ENCODE measurements at regions of chr4 and their contacts with region 1.

Region 1: DNA sequence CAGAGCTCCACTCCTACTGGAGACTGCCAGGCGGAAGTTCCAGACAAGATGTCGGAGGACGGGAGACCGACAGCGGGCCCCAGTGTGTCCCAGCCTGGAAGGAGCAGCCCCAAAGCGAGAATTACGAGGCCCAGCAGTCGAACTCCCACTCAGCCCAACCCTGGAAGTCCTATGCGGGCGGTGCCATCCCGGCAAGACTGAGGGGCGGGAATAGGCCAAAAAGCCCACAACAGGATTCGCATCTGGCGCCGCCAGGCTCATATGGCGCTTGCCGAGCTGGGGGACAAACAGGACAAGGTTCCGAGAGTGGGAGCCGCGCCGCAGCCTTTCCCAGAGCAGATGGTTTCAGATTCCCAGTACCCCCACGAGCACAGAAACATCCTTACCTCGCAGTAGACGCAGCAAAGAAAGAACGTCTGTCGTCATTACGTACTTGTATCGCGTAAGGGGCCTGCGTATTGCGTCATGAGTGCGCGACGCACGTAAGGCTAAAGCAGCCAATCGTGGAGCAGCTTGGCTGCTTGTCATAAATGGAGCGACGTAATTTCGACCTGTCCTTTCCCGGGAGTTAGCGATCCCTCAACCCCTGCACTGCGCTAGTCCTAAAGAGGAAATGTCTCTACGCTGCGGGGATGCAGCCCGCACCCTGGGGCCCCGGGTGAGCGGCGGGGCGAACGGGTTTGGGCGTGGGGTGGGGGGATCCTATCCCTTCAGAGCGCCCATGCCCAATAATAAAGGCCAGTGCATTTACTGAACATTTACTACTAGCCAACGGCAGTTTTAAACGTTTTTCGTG is at the starts of genes LIAS and RPL9:
- DNase-seq: peak; percentile 94 to 99
- ATAC-seq: peak; percentile 80 to 94 (median 87)
- H3K4me3 ChIP-seq: peak within 1 kb of the TSS; percentile 99
- H3K4me3 Mint-ChIP-seq: peak within 1 kb of the TSS; percentile 98
- H3K27ac ChIP-seq: peak within 1 kb of the TSS; percentile 100
- H3K27ac Mint-ChIP-seq: peak within 1 kb of the TSS; percentile 99 to 100
- H3K4me1 ChIP-seq: peaks cover 19% of the 10 kb centered on the region
- H3K4me1 Mint-ChIP-seq: peaks cover 28 to 34% of the 10 kb centered on the region in 2 donors
- H3K27me3 ChIP-seq: no peaks in the 10 kb centered on the region
- H3K27me3 Mint-ChIP-seq: no peaks in the 10 kb centered on the region
- CTCF ChIP-seq: no peak
- total RNA-seq, gene LIAS: 10.6 to 14.3 (median 11.9) TPM
- total RNA-seq, gene RPL9: 848 to 1,179 (median 853) TPM

Region 2: DNA sequence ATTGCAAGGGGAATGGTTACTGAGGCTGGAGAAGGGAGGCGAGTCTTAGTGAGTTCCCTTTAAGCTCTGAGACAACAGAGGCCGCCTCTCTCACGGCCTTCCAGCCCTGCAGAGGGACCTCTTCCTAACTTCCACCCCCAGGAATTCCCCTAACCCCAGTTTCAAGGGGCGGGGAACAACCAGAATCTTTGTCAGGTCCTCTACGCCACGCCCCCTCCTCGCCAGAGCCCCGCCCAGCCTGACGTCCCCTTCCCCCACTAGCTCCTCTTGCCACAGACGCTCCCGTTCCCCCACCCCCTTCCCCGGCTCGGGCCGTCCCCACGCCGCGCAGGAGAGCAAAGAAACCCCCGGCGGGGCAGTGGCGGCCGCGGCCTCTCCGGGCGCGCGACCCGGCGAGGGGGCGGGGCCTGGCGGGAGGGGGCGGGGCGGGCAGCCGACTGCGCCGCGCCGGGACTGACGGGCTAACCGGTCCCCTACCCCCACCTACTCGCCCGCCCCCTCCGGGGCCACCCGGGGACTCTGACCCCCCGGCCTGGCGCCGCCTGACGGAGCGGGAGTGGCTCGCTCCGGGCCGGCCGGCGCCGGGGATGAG is 414.2 kb before region 1 on chr4:
- intact Hi-C with region 1: loop called (anchors 10 kb)
- DNase-seq: peak; percentile 94 to 99
- ATAC-seq: peak; percentile 86 to 96 (median 87)
- H3K4me3 ChIP-seq: peak overlapping the region; percentile 49
- H3K4me3 Mint-ChIP-seq: peak overlapping the region; percentile 90
- H3K27ac ChIP-seq: peak overlapping the region; percentile 80
- H3K27ac Mint-ChIP-seq: peak overlapping the region; percentile 92 to 93
- H3K4me1 ChIP-seq: peaks cover 22% of the 10 kb centered on the region
- H3K4me1 Mint-ChIP-seq: peaks cover 36 to 38% of the 10 kb centered on the region in 2 donors
- H3K27me3 ChIP-seq: no peaks in the 10 kb centered on the region
- H3K27me3 Mint-ChIP-seq: no peaks in the 10 kb centered on the region
- CTCF ChIP-seq: no peak

Region 3: GRCh38 chr4:39353478-39354253 is 105.0 kb before region 1 on chr4:
- intact Hi-C with region 1: loop called (anchors 2 kb)
- DNase-seq: peak in 1 of 2 donors; percentile 71
- ATAC-seq: peak; percentile 79 to 84 (median 82)
- H3K4me3 ChIP-seq: peak overlapping the region; percentile 41
- H3K4me3 Mint-ChIP-seq: peak overlapping the region; percentile 88
- H3K27ac ChIP-seq: peak overlapping the region; percentile 98
- H3K27ac Mint-ChIP-seq: peak overlapping the region; percentile 99
- H3K4me1 ChIP-seq: peaks cover 11% of the 10 kb centered on the region
- H3K4me1 Mint-ChIP-seq: peaks cover 45 to 47% of the 10 kb centered on the region in 2 donors
- H3K27me3 ChIP-seq: no peaks in the 10 kb centered on the region
- H3K27me3 Mint-ChIP-seq: no peaks in the 10 kb centered on the region
- CTCF ChIP-seq: no peak

Region 4: DNA sequence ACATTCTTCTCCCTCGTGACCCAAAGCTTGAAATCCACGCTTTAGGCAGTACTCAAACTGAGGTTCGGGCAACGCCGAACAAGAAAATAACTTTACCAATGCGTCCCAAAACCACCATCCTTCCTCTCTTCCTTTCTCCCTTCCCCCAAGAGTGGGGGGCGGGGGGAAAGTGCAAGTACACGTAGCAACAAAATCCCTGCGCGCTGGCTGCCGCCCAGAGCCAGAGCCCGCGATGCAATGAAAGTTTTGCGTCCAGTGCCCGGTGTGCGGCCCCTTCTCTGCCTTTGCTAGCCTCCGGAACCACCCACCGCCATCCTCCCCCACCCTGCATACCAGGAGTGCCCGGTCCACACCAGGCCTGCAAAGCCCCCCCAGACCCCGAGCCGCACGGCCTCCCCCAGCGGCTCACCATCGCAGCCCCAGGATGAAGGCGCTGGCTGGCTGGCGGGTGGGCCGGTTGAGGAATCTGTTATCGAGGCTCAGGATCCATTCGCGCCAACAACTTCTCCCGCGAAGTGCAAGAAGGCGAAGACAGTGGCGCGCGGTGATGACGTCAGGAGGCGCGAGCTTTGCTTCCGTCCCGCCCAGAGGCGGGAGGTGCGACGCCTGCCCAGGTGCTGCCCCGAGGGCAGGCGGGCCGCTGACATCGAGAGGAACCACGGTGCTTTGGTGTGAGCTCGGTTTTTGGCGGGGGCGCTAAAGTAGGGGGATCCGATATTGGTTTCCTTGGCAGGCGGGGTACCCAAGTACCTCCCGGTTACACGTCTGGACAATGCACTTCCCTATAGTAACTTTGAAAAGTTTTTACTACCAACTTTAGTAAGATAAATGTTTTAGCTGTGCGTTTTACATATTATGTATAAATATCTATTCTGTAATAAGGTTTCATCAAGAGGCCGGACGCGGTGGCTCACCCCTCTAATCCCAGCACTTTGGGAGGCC is 92.6 kb before region 1 on chr4 and contains the start of gene RFC1:
- intact Hi-C with region 1: loop called (anchors 5 kb)
- DNase-seq: peak; percentile 94 to 97
- ATAC-seq: peak; percentile 95 to 98 (median 97)
- H3K4me3 ChIP-seq: peak within 1 kb of the TSS; percentile 95
- H3K4me3 Mint-ChIP-seq: peak within 1 kb of the TSS; percentile 93
- H3K27ac ChIP-seq: peak within 1 kb of the TSS; percentile 59
- H3K27ac Mint-ChIP-seq: peak within 1 kb of the TSS; percentile 89 to 97
- H3K4me1 ChIP-seq: peaks cover 14% of the 10 kb centered on the region
- H3K4me1 Mint-ChIP-seq: peaks cover 27 to 38% of the 10 kb centered on the region in 2 donors
- H3K27me3 ChIP-seq: no peaks in the 10 kb centered on the region
- H3K27me3 Mint-ChIP-seq: no peaks in the 10 kb centered on the region
- CTCF ChIP-seq: no peak
- total RNA-seq, gene RFC1: 74.6 to 103 (median 84.7) TPM

Region 5: GRCh38 chr4:39446751-39447573 is 11.7 kb before region 1 on chr4:
- intact Hi-C with region 1: loop called (anchors 1 kb)
- DNase-seq: peak; percentile 71 to 77
- ATAC-seq: peak; percentile 94 to 96 (median 95)
- H3K4me3 ChIP-seq: peak overlapping the region; percentile 24
- H3K4me3 Mint-ChIP-seq: peak overlapping the region; percentile 76
- H3K27ac ChIP-seq: peak overlapping the region; percentile 1
- H3K27ac Mint-ChIP-seq: peak overlapping the region; percentile 68 to 84
- H3K4me1 ChIP-seq: peaks cover 12% of the 10 kb centered on the region
- H3K4me1 Mint-ChIP-seq: peaks cover 6 to 10% of the 10 kb centered on the region in 2 donors
- H3K27me3 ChIP-seq: no peaks in the 10 kb centered on the region
- H3K27me3 Mint-ChIP-seq: peaks cover 0 to 3% of the 10 kb centered on the region in 2 donors
- CTCF ChIP-seq: no peak

Region 6: DNA sequence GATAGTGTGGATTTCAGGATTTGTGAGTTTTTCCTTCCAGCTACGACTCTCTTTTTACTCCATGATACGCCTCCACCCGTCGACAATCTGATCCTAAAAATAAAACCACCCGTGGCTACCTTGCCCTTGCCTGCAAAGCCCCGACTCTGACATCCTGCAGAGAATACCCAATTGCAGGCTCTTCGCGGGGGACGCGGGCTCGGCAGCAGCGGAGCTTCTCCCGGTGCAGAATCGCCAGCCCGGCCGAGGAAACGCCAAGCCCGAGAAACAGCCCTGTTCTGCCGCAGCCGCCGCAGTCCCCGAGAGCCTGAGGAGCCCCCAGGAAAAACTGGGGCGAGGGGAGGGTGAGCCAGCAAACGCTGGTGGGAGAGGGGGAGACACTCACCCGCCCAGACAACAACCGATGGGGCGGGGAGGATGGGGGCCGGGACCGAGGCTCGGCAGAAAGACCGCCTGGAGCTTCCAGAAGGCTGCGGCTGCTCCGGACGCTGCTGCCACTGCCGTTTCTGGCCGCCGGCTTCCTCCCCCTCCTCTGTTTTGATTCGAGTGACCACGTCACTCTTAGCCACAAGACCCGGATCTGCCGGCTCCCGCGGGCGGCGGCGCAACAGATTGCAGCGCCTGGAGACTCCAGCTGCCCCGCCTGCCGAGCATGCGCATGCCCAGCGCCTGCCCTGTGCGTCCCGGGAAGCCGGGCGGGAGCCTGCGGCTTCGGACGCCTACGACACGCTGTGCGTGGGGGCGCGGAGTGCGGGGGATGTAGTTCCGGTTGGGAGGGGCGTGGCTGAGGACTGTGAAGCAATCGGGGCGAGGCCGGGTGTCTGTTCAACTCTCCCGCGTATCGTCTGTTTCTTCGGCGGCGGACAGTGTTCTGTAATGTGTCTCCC is 179.9 kb after region 1 on chr4 and contains the start of gene SMIM14:
- intact Hi-C with region 1: loop called (anchors 5 kb)
- DNase-seq: peak; percentile 80 to 93
- ATAC-seq: peak; percentile 76 to 90 (median 80)
- H3K4me3 ChIP-seq: peak within 1 kb of the TSS; percentile 76
- H3K4me3 Mint-ChIP-seq: peak within 1 kb of the TSS; percentile 94
- H3K27ac ChIP-seq: peak within 1 kb of the TSS; percentile 90
- H3K27ac Mint-ChIP-seq: peak within 1 kb of the TSS; percentile 94
- H3K4me1 ChIP-seq: peaks cover 21% of the 10 kb centered on the region
- H3K4me1 Mint-ChIP-seq: peaks cover 39 to 48% of the 10 kb centered on the region in 2 donors
- H3K27me3 ChIP-seq: no peaks in the 10 kb centered on the region
- H3K27me3 Mint-ChIP-seq: no peaks in the 10 kb centered on the region
- CTCF ChIP-seq: no peak
- total RNA-seq, gene SMIM14: 12.6 to 21.8 (median 15.2) TPM

Measured in natural killer cell (primary cell).